Right ventricle myocardium inferior (tissue), 1 donor: ENCODE measurements at regions of chr12 and their contacts with region 1.

Region 1: GRCh38 chr12:31589904-31590641 is 863 bp downstream of the DENND5B start:
- DNase-seq: peak; percentile 83
- ATAC-seq: peak; percentile 68

Region 2: GRCh38 chr12:31485581-31485980 is 104.5 kb before region 1 on chr12:
- intact Hi-C with region 1: loop called (anchors 5 kb)
- DNase-seq: no peak
- ATAC-seq: peak; percentile 56

Region 3: GRCh38 chr12:31536672-31537071 is 53.4 kb before region 1 on chr12:
- intact Hi-C with region 1: loop called (anchors 10 kb)
- DNase-seq: no peak
- ATAC-seq: no peak

Region 4: DNA sequence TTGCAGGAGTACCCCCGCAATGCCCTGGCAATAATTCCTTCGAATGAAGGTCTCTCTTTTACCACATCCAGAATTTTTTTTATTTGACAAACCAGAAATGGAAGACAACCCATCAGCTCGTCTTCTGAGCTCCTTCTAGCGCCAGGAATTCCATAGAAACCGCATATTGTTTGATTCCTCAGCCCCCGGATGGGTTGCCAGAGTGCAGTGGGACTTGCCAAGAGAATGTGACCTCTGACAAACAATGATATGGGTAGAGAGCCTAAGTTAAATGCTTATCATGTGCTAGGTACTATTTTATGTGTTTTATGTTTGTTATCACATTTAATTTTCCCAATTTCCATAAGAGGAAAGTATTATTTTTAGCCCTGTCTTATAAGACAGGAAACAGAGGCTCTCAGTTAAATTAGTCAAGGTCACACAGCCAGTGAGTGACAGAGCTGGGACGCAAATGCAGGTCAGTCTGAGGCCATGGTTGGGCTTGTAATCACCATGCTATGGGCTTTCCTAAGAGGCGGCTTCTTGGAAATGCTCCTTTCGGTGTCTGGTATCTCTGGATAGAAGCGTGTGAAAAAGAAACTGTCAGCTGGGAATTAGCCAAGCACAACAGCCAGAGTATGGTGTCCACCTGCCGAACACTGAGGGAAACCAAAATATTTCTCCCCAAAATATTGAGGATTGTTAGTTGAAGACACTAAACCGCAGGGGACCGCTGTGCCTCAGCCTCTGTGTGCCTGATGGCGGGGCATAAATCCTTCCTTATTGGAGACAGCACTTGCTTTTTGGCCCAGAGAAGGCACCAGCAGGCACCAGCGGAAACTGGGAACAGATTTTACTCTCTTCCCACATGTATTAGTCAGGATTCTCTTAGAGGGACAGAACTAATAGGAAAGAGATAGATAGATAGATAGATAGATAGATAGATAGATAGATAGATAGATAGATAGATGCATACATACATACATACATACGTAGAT is 40.0 kb after region 1 on chr12:
- intact Hi-C with region 1: loop called (anchors 5 kb)
- DNase-seq: no peak
- ATAC-seq: peak; percentile 94